ENCODE measurements at regions of chr4 and their contacts with region 1.

Region 1: GRCh38 chr4:181569553-181569952 is 673.6 kb upstream of the TENM3 start:
- DNase-seq: peak; percentile 67
- H3K4me3 Mint-ChIP-seq: no peak overlapping the region
- H3K27ac Mint-ChIP-seq: no peak overlapping the region
- H3K4me1 Mint-ChIP-seq: no peaks in the 10 kb centered on the region
- H3K27me3 Mint-ChIP-seq: no peaks in the 10 kb centered on the region
- CTCF ChIP-seq: peak; percentile 49

Region 2: DNA sequence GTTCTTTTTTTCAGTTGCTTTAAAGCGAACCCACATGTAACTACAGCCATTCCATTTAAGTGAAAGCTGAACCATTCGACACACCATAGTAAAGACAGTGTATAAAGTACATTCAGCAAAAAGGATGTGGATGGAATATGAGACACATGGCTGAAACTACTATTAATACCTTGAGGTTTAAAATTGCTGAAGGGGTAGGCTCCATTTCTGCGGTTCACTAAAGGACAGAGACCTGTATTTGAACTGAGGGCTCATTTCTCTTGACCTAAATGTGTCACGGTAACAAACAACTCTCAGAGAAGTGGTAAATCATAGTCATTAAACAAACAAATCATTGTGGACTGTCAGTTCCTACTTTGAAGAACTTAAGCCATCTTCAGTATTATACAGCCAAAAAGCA is 411.9 kb before region 1 on chr4:
- CTCF ChIA-PET with region 1: no interaction called
- POLR2A ChIA-PET with region 1: no interaction called
- intact Hi-C with region 1: no loop called
- DNase-seq: no peak
- H3K4me3 Mint-ChIP-seq: no peak overlapping the region
- H3K27ac Mint-ChIP-seq: no peak overlapping the region
- H3K4me1 Mint-ChIP-seq: peaks cover 3% of the 10 kb centered on the region
- H3K27me3 Mint-ChIP-seq: no peaks in the 10 kb centered on the region
- CTCF ChIP-seq: no peak

Region 3: GRCh38 chr4:181776264-181777054 is 206.9 kb after region 1 on chr4:
- CTCF ChIA-PET with region 1: no interaction called
- POLR2A ChIA-PET with region 1: no interaction called
- intact Hi-C with region 1: no loop called
- DNase-seq: no peak
- H3K4me3 Mint-ChIP-seq: no peak overlapping the region
- H3K27ac Mint-ChIP-seq: no peak overlapping the region
- H3K4me1 Mint-ChIP-seq: no peaks in the 10 kb centered on the region
- H3K27me3 Mint-ChIP-seq: no peaks in the 10 kb centered on the region
- CTCF ChIP-seq: no peak

Region 4: DNA sequence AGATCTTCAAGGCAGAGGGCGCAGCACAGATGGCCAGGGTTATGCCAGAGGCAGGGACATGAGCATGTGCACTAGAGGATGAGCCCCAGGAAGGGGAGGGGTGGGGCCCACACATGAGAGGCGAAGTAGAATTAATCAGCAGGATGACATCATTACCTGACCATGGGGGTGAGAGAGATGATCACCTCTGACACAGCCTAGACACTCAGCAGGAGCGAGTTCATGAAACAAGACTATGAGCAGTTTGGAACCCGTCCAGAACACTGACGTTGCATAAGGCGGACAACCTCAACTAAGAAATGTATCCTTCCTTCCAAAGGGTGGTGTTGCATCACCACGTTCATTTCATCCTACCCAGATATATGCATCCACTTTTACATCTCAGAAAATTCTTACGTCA is 226.9 kb after region 1 on chr4:
- CTCF ChIA-PET with region 1: interaction called, 3 read pairs
- POLR2A ChIA-PET with region 1: no interaction called
- intact Hi-C with region 1: loop called (anchors 10 kb)
- DNase-seq: peak; percentile 97
- H3K4me3 Mint-ChIP-seq: no peak overlapping the region
- H3K27ac Mint-ChIP-seq: peak overlapping the region; percentile 68
- H3K4me1 Mint-ChIP-seq: peaks cover 15% of the 10 kb centered on the region
- H3K27me3 Mint-ChIP-seq: no peaks in the 10 kb centered on the region
- CTCF ChIP-seq: no peak

Region 5: GRCh38 chr4:181939199-181939945 is 369.8 kb after region 1 on chr4:
- CTCF ChIA-PET with region 1: no interaction called
- POLR2A ChIA-PET with region 1: no interaction called
- intact Hi-C with region 1: loop called (anchors 10 kb)
- DNase-seq: peak; percentile 24
- H3K4me3 Mint-ChIP-seq: no peak overlapping the region
- H3K27ac Mint-ChIP-seq: peak overlapping the region; percentile 43
- H3K4me1 Mint-ChIP-seq: peaks cover 6% of the 10 kb centered on the region
- H3K27me3 Mint-ChIP-seq: no peaks in the 10 kb centered on the region
- CTCF ChIP-seq: peak; percentile 24

Region 6: GRCh38 chr4:182219411-182220056 is 650.0 kb after region 1 on chr4:
- CTCF ChIA-PET with region 1: no interaction called
- POLR2A ChIA-PET with region 1: no interaction called
- intact Hi-C with region 1: no loop called
- DNase-seq: peak; percentile 49
- H3K4me3 Mint-ChIP-seq: no peak overlapping the region
- H3K27ac Mint-ChIP-seq: no peak overlapping the region
- H3K4me1 Mint-ChIP-seq: no peaks in the 10 kb centered on the region
- H3K27me3 Mint-ChIP-seq: no peaks in the 10 kb centered on the region
- CTCF ChIP-seq: no peak

Measured in MCF 10A (cell line).